ENCODE measurements at regions of chr9 and their contacts with region 1.

Region 1: DNA sequence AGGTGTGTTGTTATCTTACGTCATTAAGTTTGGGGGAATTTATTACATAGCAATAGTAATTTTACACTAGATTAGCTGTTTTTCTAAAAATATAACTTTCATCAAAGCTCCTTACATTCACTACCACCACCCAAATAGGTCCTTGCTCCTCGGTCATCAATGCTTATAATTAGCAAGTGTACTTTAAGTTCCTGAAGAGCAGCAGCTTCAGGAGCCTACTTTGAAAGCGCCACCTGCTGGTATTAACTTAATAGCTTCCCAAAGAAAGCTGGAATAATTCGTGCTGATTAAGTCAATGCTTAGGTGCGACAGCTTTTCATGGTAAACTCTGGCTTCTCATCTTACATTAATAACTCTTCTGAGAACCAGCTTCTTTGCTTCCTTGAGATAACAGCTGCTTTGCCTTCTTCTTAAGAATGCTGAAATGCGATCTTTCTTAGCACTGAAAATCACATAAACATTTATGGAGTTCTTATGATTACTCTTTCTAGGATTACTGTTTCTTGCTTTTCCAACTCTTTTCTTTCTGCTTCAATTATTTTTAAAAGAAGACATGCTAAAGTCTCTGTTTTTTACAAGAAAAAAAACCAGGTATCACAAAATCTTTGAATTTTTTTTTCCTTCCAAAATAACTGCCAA is 10.0 kb upstream of the C5 start:
- DNase-seq: no peak
- ATAC-seq: peak; percentile 42 to 44
- H3K4me3 ChIP-seq: no peak overlapping the region
- H3K27ac ChIP-seq: no peak overlapping the region
- H3K4me1 ChIP-seq: no peaks in the 10 kb centered on the region
- H3K27me3 ChIP-seq: no peaks in the 10 kb centered on the region
- CTCF ChIP-seq: peak; percentile 50 to 76 (median 73)
- POLR2A ChIP-seq: no peak

Region 2: DNA sequence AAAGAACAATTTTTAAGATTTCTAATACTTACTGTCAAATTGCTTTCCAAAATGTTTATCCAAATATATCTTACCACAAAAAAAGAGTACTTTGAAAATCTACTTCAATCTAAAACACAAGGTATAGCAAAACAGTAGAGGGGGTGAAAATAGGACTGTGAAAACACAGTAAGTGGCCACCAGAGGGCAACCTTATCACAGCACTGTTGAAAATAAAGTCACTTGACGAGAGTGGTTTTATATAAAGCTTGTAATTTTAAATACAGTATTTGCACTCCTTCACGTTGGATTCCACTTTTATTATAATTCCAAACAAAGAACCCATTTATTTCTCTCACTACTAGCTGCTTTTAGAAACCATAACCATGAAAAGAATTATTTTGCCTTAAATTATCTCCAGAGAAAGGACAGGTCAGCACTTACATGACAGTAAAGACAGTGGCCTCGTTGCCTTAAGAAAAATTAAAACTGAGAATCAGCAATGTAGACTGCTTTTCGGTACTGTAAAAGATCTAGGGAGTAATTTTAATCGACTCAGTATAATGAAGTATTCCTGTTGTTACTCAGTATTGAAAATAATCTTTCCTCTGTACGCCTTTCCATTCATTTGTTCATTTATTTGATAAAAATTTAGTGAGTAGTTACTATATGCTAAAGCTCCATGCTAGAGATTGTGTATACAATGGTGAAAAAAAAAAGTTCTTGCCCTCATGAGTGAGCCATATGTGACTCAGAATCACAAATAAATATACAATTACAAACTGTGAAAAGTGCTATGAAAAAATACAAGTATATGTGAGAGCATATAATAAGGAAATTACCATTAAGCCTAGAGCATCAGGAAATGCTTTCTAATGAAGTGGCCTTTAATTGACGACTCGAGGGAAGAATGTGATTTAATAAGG is 440.1 kb before region 1 on chr9:
- in situ Hi-C with region 1: no loop called
- intact Hi-C with region 1: loop called (anchors 10 kb)
- DNase-seq: peak; percentile 20 to 33
- ATAC-seq: peak; percentile 89 to 97
- H3K4me3 ChIP-seq: no peak overlapping the region
- H3K27ac ChIP-seq: peak overlapping the region in 1 of 4 donors; percentile 29
- H3K4me1 ChIP-seq: no peaks in the 10 kb centered on the region
- H3K27me3 ChIP-seq: no peaks in the 10 kb centered on the region
- CTCF ChIP-seq: peak; percentile 57 to 84 (median 73)
- POLR2A ChIP-seq: no peak

Region 3: GRCh38 chr9:120755827-120756434 is 304.2 kb before region 1 on chr9:
- in situ Hi-C with region 1: loop called (anchors 5 to 10 kb)
- intact Hi-C with region 1: loop called (anchors 1 kb)
- DNase-seq: peak; percentile 17 to 34
- ATAC-seq: peak; percentile 56 to 74
- H3K4me3 ChIP-seq: no peak overlapping the region
- H3K27ac ChIP-seq: no peak overlapping the region
- H3K4me1 ChIP-seq: peaks cover 0 to 3% of the 10 kb centered on the region in 2 donors
- H3K27me3 ChIP-seq: no peaks in the 10 kb centered on the region
- CTCF ChIP-seq: peak; percentile 74 to 86 (median 86)
- POLR2A ChIP-seq: no peak

Region 4: GRCh38 chr9:120985810-120986222 is 74.3 kb before region 1 on chr9:
- in situ Hi-C with region 1: loop called in 2 of 4 experiments (anchors 5 to 10 kb)
- intact Hi-C with region 1: loop called (anchors 2 kb)
- DNase-seq: no peak
- ATAC-seq: peak in 1 of 2 donors; percentile 62
- H3K4me3 ChIP-seq: no peak overlapping the region
- H3K27ac ChIP-seq: no peak overlapping the region
- H3K4me1 ChIP-seq: no peaks in the 10 kb centered on the region
- H3K27me3 ChIP-seq: no peaks in the 10 kb centered on the region
- CTCF ChIP-seq: peak in 4 of 5 experiments; percentile 29 to 47 (median 40)
- POLR2A ChIP-seq: no peak

Region 5: DNA sequence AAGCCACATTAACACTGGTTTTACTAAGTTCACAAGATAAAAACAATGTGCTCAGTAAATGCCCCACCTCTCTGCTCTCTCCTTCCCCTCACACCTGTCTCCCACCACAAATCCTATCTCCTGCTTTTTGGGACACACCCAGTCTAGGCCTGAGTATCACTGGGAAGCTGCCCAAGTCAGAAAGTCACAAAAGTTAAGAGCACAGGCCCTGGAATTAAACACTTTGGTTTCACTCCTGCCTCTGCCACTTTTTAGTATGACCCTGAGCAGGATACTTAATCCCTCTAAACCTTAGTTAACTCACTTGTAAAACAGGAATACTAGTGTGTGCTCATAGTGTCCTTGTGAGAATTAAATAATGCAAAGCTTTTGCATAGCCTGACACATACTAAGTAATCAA is 21.3 kb before region 1 on chr9:
- in situ Hi-C with region 1: no loop called
- intact Hi-C with region 1: no loop called
- DNase-seq: no peak
- ATAC-seq: no peak
- H3K4me3 ChIP-seq: no peak overlapping the region
- H3K27ac ChIP-seq: no peak overlapping the region
- H3K4me1 ChIP-seq: no peaks in the 10 kb centered on the region
- H3K27me3 ChIP-seq: no peaks in the 10 kb centered on the region
- CTCF ChIP-seq: no peak
- POLR2A ChIP-seq: no peak